GM13977 (cell line): ENCODE measurements at regions of chr11 and their contacts with region 1.

Region 1: GRCh38 chr11:113289431-113290187 is 24.8 kb upstream of the TTC12 start:
- DNase-seq: peak; percentile 75
- CTCF ChIP-seq: peak; percentile 91

Region 2: GRCh38 chr11:112280268-112281126 is 1009.1 kb before region 1 on chr11:
- in situ Hi-C with region 1: loop called (anchors 25 kb)
- DNase-seq: peak; percentile 83
- CTCF ChIP-seq: peak; percentile 75

Region 3: GRCh38 chr11:112588252-112588694 is 701.3 kb before region 1 on chr11:
- in situ Hi-C with region 1: loop called (anchors 25 kb)
- DNase-seq: peak; percentile 37
- CTCF ChIP-seq: peak; percentile 78

Region 4: DNA sequence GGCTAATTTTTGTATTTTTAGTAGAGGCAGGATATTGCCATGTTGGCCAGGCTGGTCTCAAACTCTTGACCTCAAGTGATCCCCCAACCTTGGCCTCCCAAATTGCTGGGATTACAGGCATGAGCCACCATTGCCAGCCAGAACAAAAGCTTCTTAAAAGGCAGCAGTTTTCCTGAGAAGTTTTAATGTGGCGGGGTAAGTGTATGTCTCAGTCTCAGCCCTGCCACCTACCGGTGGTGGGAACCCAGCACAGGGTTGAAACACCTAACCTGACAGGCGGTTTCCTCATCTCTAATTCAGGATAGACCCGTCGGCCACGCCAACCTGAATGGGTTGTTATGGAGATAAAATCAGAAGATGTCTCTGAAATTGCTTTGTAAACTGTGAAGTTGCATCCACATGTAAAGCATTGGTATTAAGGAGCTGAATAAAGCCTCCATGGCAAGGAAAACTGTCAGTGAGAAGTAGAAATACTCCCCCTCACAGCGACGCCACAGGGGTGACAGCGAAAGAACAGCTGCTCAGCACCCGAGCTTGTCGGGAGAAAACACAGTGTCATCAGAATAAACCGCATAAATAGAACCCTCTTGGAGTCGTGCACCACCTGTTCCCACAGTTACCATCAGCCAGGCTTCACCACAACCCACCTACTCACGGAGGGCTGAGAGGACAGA is 494.3 kb before region 1 on chr11:
- in situ Hi-C with region 1: loop called (anchors 25 kb)
- DNase-seq: peak; percentile 66
- CTCF ChIP-seq: peak; percentile 83

Region 5: DNA sequence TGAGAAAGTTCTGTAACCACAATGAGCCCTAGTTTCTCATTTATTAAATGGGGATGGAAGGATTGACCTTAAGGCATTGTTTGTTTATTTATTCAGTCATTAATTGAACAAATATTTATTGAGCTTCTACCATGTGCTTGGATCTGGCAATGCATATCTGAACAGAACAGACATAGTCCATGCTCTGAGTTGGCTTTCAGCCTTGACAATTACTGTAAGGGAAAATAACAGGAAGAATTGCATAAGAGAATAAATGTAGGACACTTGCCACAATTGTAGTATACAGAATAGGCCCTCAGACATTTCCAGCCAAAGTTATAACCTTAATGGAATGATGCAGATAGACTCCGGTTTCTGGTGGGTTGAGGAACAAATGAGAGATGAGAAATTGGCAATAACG is 135.8 kb before region 1 on chr11:
- in situ Hi-C with region 1: no loop called
- DNase-seq: no peak
- CTCF ChIP-seq: no peak

Region 6: DNA sequence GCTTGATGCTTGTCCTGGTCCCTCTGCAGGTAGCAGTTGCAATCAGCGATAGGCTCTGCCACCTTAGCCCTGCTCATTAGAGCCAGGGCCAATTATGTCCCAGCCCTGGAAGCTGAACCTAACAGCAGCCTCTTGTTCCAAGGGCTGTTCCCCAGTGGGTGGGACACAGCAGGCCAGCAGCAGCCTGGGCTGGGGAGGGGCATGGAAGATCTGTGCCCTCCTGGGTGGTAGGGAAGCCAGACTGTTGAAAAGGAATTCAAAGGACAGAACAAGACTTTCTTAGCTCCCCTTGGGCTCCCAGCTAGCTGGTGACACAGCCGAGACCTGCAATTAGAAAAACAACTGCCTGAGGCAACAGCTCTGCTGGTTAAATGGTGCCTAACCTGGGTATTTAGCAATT is 168.2 kb after region 1 on chr11:
- in situ Hi-C with region 1: no loop called
- DNase-seq: no peak
- CTCF ChIP-seq: no peak